ENCODE measurements at regions of chr2 and their contacts with region 1.

Region 1: DNA sequence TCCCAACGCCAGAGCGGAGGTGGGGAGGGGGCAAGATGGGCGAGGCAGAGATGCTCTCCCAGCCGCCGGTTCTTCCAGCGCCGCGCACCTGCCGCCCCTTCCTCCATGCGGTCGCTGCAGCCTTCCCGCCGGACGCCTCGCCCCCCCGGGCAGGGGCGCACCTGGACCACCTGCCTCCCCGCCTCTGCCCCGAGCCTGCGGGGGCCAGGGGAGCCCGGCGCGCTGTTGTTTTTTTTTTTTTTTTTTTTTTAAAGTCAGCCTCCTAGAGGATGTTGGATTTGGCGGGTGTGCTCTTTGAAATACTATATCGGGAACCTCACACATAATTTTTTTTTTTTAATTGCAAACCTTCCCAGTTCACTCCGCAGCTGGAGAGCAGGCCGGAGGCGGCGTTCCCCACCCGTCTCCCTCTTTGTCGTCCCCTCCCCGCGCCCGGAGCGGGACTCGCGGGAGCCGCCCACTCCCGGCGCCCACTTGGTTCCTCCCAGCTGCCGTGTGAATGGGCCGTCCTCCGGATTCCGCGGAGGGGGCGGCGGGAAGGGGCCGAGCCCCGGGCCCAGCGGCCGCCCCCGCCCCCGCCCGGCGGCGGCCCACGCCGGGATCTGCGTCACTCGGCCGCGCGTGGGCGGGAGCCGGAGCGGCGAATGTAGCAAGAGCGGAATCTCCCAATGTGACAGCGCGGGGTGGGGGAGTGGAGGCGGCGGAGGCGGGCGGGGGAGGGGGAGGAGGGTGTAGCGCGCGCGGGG is 421 bp upstream of the NAB1 start:
- DNase-seq: peak; percentile 96
- H3K4me3 ChIP-seq: peak overlapping the region; percentile 42 to 98 (median 89)
- H3K27ac ChIP-seq: peak overlapping the region; percentile 93 to 96 (median 96)
- H3K4me1 ChIP-seq: peaks cover 0 to 49% (median 28%) of the 10 kb centered on the region in 4 donors
- H3K27me3 ChIP-seq: no peaks in the 10 kb centered on the region
- CTCF ChIP-seq: no peak
- EP300 ChIP-seq: no peak
- POLR2A ChIP-seq: peak; percentile 20 to 36

Region 2: GRCh38 chr2:190235101-190235500 is 413.4 kb before region 1 on chr2:
- intact Hi-C with region 1: no loop called
- DNase-seq: no peak
- H3K4me3 ChIP-seq: no peak overlapping the region
- H3K27ac ChIP-seq: no peak overlapping the region
- H3K4me1 ChIP-seq: no peaks in the 10 kb centered on the region
- H3K27me3 ChIP-seq: no peaks in the 10 kb centered on the region
- CTCF ChIP-seq: no peak
- EP300 ChIP-seq: no peak
- POLR2A ChIP-seq: no peak

Region 3: GRCh38 chr2:190343500-190344275 is 304.8 kb before region 1 on chr2 and contains the start of gene INPP1:
- intact Hi-C with region 1: loop called (anchors 10 kb)
- DNase-seq: peak; percentile 85
- H3K4me3 ChIP-seq: peak within 1 kb of the TSS; percentile 61 to 91 (median 80)
- H3K27ac ChIP-seq: peak within 1 kb of the TSS; percentile 91 to 94 (median 94)
- H3K4me1 ChIP-seq: peaks cover 0 to 29% (median 18%) of the 10 kb centered on the region in 4 donors
- H3K27me3 ChIP-seq: no peaks in the 10 kb centered on the region
- CTCF ChIP-seq: no peak
- EP300 ChIP-seq: no peak
- POLR2A ChIP-seq: no peak
- total RNA-seq, gene INPP1: 12.5 to 19.9 (median 15.5) TPM

Region 4: DNA sequence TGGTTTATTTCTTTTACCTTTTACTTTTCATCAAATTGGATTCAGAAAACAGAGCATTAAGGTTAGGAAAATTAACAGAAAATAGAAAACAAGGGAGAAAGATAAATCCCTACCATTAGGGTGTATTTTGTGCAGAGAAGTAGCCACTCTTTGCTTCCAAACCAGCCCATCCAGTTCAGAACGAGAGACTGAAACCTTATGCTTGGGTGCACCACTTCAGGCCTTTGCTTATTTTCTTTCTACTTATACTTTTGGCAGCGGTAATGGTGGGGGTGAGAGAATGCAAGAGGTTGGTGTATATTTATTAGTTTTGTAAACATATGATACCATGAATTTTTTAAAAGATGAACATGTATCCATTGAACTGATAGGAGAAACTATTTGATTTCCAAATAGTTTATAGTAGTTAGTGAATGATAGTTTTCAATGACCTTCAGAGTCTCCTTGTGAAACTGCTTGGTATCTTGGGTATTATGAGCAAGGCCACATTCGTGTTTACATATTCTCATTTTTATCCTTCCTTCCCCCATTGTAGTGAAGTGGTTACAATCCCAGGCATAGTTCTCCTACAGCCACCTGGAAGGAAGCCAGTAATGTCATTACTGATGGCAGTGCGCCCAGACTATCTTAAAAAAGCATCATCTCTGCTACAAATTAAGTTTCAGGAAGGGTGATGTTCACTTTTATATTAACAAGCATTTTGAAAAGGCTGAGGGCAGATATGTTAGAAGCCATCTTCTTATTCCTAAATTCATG is 179.5 kb before region 1 on chr2:
- intact Hi-C with region 1: loop called (anchors 5 kb)
- DNase-seq: peak; percentile 92
- H3K4me3 ChIP-seq: no peak overlapping the region
- H3K27ac ChIP-seq: peak overlapping the region; percentile 80 to 87 (median 86)
- H3K4me1 ChIP-seq: peaks cover 0 to 43% (median 41%) of the 10 kb centered on the region in 4 donors
- H3K27me3 ChIP-seq: no peaks in the 10 kb centered on the region
- CTCF ChIP-seq: no peak
- EP300 ChIP-seq: peak in 3 of 4 donors; percentile 36 to 72 (median 69)
- POLR2A ChIP-seq: no peak

Region 5: GRCh38 chr2:190578158-190579057 is 70.1 kb before region 1 on chr2:
- intact Hi-C with region 1: loop called (anchors 5 kb)
- DNase-seq: no peak
- H3K4me3 ChIP-seq: no peak overlapping the region
- H3K27ac ChIP-seq: peak overlapping the region; percentile 34 to 75 (median 45)
- H3K4me1 ChIP-seq: peaks cover 0 to 58% (median 42%) of the 10 kb centered on the region in 4 donors
- H3K27me3 ChIP-seq: no peaks in the 10 kb centered on the region
- CTCF ChIP-seq: no peak
- EP300 ChIP-seq: no peak
- POLR2A ChIP-seq: no peak

Region 6: DNA sequence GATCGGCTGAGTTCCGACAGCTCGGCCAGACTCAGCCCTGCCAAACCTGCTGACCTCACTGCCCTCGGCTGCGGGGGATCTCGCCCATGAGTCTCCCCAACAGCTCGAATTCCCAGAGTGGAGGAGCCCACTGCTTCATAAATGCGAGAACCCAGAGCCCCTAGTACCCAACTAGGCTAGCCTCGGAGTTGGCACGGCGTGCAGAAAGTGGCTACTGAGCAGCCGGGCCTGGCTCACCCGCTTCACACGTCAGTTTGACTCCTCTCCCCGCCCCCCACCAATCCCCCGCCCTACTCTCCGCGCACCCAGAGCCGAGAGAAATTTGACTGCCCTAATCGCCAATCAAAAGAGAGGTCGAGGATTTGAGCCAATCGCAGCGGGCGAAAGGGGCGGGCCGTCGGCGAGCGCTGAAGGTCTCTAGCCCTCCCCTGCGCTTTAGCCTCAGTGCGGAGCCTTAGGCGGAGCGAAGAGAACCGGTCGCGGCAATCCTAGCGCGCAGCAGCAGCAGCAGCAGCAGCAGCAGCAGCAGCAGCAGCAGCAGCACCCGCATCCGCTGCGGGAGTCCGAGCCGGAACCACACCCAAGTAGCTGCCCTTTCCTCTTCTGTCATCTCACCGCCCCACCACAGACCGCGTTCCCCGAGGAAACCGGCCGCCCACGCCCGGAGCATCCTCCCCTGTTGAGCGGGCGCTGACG is 232.1 kb after region 1 on chr2 and contains the start of gene GLS:
- intact Hi-C with region 1: loop called (anchors 10 kb)
- DNase-seq: peak; percentile 99
- H3K4me3 ChIP-seq: peak within 1 kb of the TSS; percentile 70 to 94 (median 92)
- H3K27ac ChIP-seq: peak within 1 kb of the TSS; percentile 87 to 97 (median 96)
- H3K4me1 ChIP-seq: peaks cover 0 to 36% (median 25%) of the 10 kb centered on the region in 4 donors
- H3K27me3 ChIP-seq: no peaks in the 10 kb centered on the region
- CTCF ChIP-seq: no peak
- EP300 ChIP-seq: peak in 1 of 4 donors; percentile 8
- POLR2A ChIP-seq: peak; percentile 97 to 98
- total RNA-seq, gene GLS: 87.1 to 139 (median 111) TPM

Region 7: GRCh38 chr2:190961918-190962487 is 313.5 kb after region 1 on chr2:
- intact Hi-C with region 1: no loop called
- DNase-seq: no peak
- H3K4me3 ChIP-seq: no peak overlapping the region
- H3K27ac ChIP-seq: no peak overlapping the region
- H3K4me1 ChIP-seq: no peaks in the 10 kb centered on the region
- H3K27me3 ChIP-seq: no peaks in the 10 kb centered on the region
- CTCF ChIP-seq: no peak
- EP300 ChIP-seq: no peak
- POLR2A ChIP-seq: no peak

Region 8: GRCh38 chr2:191677646-191678436 is 1029.4 kb after region 1 on chr2 and contains the start of gene NABP1:
- intact Hi-C with region 1: loop called (anchors 5 kb)
- DNase-seq: peak; percentile 99
- H3K4me3 ChIP-seq: peak within 1 kb of the TSS; percentile 53 to 72 (median 59)
- H3K27ac ChIP-seq: peak within 1 kb of the TSS; percentile 85 to 96 (median 90)
- H3K4me1 ChIP-seq: peaks cover 0 to 16% (median 5%) of the 10 kb centered on the region in 4 donors
- H3K27me3 ChIP-seq: no peaks in the 10 kb centered on the region
- CTCF ChIP-seq: no peak
- EP300 ChIP-seq: peak in 1 of 4 donors; percentile 39
- POLR2A ChIP-seq: peak; percentile 87 to 89
- total RNA-seq, gene NABP1: 8.2 to 12.7 (median 9.8) TPM

Measured in sigmoid colon (tissue), 7 donors.